PC-3 (cell line): ENCODE measurements at regions of chr9 and their contacts with region 1.

Region 1: GRCh38 chr9:36258208-36258988 is at the start of gene GNE:
- DNase-seq: peak; percentile 89
- ATAC-seq: peak; percentile 93
- H3K4me3 ChIP-seq: peak within 1 kb of the TSS; percentile 83
- H3K27ac ChIP-seq: peak within 1 kb of the TSS; percentile 57
- H3K4me1 ChIP-seq: peaks cover 5% of the 10 kb centered on the region; the same call in 1 of the 2 replicates
- H3K27me3 ChIP-seq: no peaks in the 10 kb centered on the region
- CTCF ChIP-seq: no peak
- total RNA-seq, gene GNE: 10.2 and 10.9 TPM in 2 replicates

Region 2: GRCh38 chr9:36317764-36318163 is 59.4 kb after region 1 on chr9:
- CTCF ChIA-PET with region 1: interaction called, 11 read pairs
- POLR2A ChIA-PET with region 1: no interaction called
- intact Hi-C with region 1: no loop called
- DNase-seq: peak; percentile 93
- ATAC-seq: peak; percentile 78
- H3K4me3 ChIP-seq: no peak overlapping the region
- H3K27ac ChIP-seq: peak overlapping the region; percentile 80
- H3K4me1 ChIP-seq: peaks cover 34% of the 10 kb centered on the region
- H3K27me3 ChIP-seq: no peaks in the 10 kb centered on the region
- CTCF ChIP-seq: no peak

Region 3: DNA sequence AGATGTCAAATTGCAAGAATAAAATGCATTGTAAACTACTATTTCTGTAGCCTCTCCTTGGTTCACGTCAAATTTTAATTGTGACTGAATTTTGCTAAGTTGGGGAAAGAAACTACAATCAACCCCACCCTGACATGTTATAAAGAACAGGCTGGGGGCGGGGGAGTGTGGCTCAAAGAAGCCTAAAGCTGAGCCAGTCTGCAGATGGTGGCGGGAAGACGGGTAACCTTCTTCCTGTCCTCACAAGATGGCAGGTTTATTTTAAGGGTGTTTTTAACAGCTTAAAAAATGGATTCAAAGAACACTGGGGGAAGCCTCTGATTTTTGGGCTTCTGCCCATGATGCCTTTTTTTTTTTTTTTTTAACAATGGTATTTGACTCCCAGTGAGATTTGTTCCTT is 245.8 kb after region 1 on chr9:
- CTCF ChIA-PET with region 1: no interaction called
- POLR2A ChIA-PET with region 1: interaction called, 14 read pairs
- intact Hi-C with region 1: no loop called
- DNase-seq: no peak
- ATAC-seq: no peak
- H3K4me3 ChIP-seq: no peak overlapping the region
- H3K27ac ChIP-seq: no peak overlapping the region
- H3K4me1 ChIP-seq: no peaks in the 10 kb centered on the region
- H3K27me3 ChIP-seq: no peaks in the 10 kb centered on the region
- CTCF ChIP-seq: no peak

Region 4: GRCh38 chr9:36592801-36593583 is 334.6 kb after region 1 on chr9:
- CTCF ChIA-PET with region 1: no interaction called
- POLR2A ChIA-PET with region 1: no interaction called
- intact Hi-C with region 1: no loop called
- DNase-seq: no peak
- ATAC-seq: no peak
- H3K4me3 ChIP-seq: no peak overlapping the region
- H3K27ac ChIP-seq: no peak overlapping the region
- H3K4me1 ChIP-seq: no peaks in the 10 kb centered on the region
- H3K27me3 ChIP-seq: no peaks in the 10 kb centered on the region
- CTCF ChIP-seq: no peak